Aorta (tissue), 5 donors: ENCODE measurements at regions of chr15 and their contacts with region 1.

Region 1: DNA sequence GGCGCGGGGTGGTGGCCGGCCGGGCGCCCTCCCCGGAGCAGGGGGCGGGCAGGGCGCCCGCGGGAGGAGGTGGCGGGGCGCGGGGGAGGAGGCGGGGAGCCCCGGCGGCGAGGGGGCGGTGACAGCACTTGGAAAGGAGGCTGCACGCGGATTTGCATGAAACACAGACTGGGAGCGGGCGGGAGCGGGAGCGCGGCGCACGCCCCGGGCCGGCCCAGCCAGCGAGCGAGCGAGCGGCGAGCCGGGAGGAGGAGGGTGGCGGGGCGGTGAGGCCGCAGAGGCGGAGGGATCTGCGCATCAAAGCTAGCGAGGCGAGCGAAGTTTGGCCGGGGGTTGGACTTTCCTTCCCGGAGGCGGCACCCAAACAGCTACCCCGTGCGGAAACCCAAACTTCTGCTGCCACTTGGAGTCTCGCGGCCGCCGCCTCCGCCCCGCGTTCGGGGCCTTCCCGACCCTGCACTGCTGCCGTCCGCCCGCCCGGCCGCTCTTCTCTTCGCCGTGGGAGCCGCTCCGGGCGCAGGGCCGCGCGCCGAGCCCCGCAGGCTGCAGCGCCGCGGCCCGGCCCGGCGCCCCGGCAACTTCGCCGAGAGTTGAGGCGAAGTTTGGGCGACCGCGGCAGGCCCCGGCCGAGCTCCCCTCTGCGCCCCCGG is at the start of gene SMAD3:
- DNase-seq: peak; percentile 95 to 96
- ATAC-seq: peak; percentile 94
- H3K4me3 ChIP-seq: peak within 1 kb of the TSS; percentile 69 to 94
- H3K27ac ChIP-seq: peak within 1 kb of the TSS; percentile 57 to 97
- H3K4me1 ChIP-seq: peaks cover 0 to 13% of the 10 kb centered on the region in 2 donors
- H3K27me3 ChIP-seq: no peaks in the 10 kb centered on the region
- total RNA-seq, gene SMAD3: 65.9 to 90.8 TPM

Region 2: GRCh38 chr15:67175643-67176071 is 110.1 kb after region 1 on chr15:
- intact Hi-C with region 1: loop called in 1 of 2 experiments (anchors 5 kb)
- DNase-seq: peak in 1 of 2 donors; percentile 78
- ATAC-seq: peak; percentile 65
- H3K4me3 ChIP-seq: no peak overlapping the region
- H3K27ac ChIP-seq: no peak overlapping the region
- H3K4me1 ChIP-seq: peaks cover 0 to 3% of the 10 kb centered on the region in 2 donors
- H3K27me3 ChIP-seq: no peaks in the 10 kb centered on the region

Region 3: DNA sequence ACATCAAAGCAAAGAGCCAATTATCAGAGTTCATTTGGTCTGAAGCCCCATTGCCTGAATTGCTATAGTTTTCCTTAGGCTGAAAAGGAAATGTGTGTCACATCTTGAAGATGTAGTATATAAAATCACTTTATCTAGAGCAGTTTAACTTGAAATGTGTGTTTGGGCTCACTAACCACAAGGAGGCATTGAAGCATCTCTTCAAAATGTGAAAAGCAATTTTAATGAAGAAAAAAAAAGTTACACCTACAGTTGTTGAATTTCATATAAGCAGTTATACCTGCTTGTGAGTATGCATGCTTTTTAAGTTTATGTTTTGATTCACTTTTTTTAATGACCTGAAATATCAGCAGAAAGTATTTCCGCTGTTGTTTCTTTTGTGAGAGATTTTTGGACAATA is 318.3 kb after region 1 on chr15:
- intact Hi-C with region 1: no loop called
- DNase-seq: no peak
- ATAC-seq: no peak
- H3K4me3 ChIP-seq: no peak overlapping the region
- H3K27ac ChIP-seq: no peak overlapping the region
- H3K4me1 ChIP-seq: no peaks in the 10 kb centered on the region
- H3K27me3 ChIP-seq: no peaks in the 10 kb centered on the region